Panc1 (cell line): ENCODE measurements at regions of chr3 and their contacts with region 1.

Region 1: DNA sequence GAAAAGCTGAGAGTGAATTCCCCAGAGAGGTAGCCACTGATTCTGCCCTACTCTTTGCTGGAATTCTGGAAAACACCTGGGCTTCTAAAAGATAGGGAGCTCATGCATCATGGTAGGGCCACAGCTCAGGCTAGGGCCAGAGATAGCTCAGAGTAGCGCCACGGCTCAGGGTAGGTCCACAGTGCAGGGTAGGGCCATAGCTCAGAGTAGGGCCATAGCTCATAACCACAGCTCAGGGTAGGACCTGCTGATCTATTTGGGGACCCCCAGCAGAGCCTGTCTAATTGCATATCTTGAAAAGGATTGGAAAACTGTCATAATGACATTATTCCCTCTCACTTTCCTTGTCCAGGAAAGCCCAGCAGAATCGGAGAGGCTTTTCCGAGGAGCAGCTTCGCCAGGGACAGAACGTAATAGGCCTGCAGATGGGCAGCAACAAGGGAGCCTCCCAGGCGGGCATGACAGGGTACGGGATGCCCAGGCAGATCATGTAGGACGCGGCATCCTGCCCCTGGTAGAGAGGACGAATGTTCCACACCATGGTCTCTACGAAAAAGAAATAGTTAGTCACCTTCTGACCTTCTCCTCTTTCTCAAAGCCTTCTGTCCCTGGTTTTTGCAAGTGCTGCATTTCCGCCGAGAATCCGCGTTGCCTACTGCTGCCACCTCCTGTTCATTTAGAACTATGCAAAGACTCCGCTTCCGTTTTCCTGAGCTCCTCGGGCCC is 14.5 kb downstream of the TAGLN3 start:
- DNase-seq: peak; percentile 55
- ATAC-seq: peak; percentile 93
- H3K4me3 ChIP-seq: no peak overlapping the region; a peak in 1 of 4 replicates
- H3K27ac ChIP-seq: no peak overlapping the region
- H3K4me1 ChIP-seq: no peaks in the 10 kb centered on the region
- H3K27me3 ChIP-seq: no peaks in the 10 kb centered on the region
- CTCF ChIP-seq: peak; percentile 91

Region 2: DNA sequence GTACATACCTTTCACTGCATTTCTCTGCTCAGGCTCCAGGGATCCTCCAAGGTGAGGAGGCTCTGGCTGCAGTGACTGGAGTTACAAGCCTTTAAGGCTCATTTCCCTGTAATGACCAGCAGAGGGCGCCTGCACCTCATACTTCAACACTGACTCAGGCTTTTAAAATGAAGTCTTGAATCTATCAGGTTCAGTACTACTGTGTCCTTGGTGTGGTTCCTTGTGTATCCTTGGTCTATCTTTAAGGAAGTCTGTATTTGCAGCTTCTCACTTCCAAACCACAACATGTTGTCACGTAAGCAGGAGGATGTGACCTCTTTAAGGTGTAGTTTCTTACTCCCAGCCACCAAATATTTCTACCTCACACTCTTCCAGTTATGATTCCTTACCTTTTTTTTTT is 295.6 kb before region 1 on chr3:
- CTCF ChIA-PET with region 1: interaction called, 12 read pairs
- POLR2A ChIA-PET with region 1: no interaction called
- in situ Hi-C with region 1: no loop called
- intact Hi-C with region 1: loop called (anchors 2 kb)
- DNase-seq: peak; percentile 71
- ATAC-seq: peak; percentile 98
- H3K4me3 ChIP-seq: no peak overlapping the region
- H3K27ac ChIP-seq: no peak overlapping the region
- H3K4me1 ChIP-seq: no peaks in the 10 kb centered on the region; the same call in 1 of the 2 replicates
- H3K27me3 ChIP-seq: peaks cover 2% of the 10 kb centered on the region; the same call in 1 of the 2 replicates
- CTCF ChIP-seq: peak; percentile 94

Region 3: DNA sequence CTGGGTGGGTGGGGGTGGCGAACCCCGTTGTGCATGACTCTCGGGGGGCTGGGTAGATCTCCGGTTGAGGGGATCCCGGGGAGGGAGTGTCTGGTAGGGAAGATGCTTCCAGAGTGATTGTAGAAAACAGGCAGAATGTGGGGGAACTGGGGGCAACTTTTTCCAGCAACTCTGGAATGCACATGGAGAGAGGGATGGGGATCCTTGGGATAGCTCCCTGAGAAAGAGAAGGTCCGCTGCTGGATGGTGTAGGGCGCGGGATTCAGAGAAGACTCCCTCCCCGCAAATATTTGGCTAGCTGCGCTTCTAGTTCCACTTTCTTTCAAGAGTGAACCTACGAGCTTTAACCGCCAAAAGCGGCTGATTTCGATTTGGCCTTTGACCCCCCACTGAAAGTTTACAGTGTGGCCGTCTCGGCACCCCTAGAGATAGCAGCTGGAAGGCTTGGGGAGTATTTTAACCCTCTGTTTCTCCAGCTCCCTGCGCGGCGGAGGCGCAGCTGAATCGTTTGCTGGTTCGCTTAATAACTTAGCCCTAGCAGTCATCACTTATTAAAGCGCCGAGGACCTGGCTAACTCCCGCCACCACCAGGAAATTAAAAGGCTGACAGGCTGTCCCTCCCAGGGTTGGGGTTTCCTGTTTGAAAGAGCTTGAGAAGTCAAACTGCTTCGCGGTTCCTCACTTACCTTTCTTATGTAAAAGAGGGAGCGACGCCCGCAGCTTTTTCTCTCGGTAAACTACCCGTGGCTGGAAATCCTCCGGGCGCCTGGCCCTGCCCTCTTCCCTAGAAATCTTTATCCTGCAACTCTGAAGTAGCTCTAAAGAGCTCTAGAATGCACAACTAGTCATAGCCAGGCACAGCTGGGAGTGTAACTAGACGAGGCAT is 153.0 kb before region 1 on chr3:
- CTCF ChIA-PET with region 1: interaction called, 11 read pairs
- POLR2A ChIA-PET with region 1: interaction called, 4 read pairs
- in situ Hi-C with region 1: no loop called
- intact Hi-C with region 1: no loop called
- DNase-seq: peak; percentile 27
- ATAC-seq: peak; percentile 89
- H3K4me3 ChIP-seq: peak overlapping the region; percentile 52 to 83
- H3K27ac ChIP-seq: peak overlapping the region; percentile 65; the same call in 1 of the 2 replicates
- H3K4me1 ChIP-seq: peaks cover 8% of the 10 kb centered on the region; the same call in 1 of the 2 replicates
- H3K27me3 ChIP-seq: peaks cover 9% of the 10 kb centered on the region
- CTCF ChIP-seq: peak; percentile 60

Region 4: GRCh38 chr3:111989061-111989678 is 24.1 kb before region 1 on chr3:
- CTCF ChIA-PET with region 1: interaction called, 41 read pairs
- POLR2A ChIA-PET with region 1: no interaction called
- in situ Hi-C with region 1: no loop called
- intact Hi-C with region 1: no loop called
- DNase-seq: peak; percentile 47
- ATAC-seq: peak; percentile 98
- H3K4me3 ChIP-seq: no peak overlapping the region
- H3K27ac ChIP-seq: no peak overlapping the region
- H3K4me1 ChIP-seq: no peaks in the 10 kb centered on the region
- H3K27me3 ChIP-seq: no peaks in the 10 kb centered on the region
- CTCF ChIP-seq: peak; percentile 81